ENCODE measurements at regions of chrX and their contacts with region 1.

Region 1: GRCh38 chrX:22063284-22063683 is 31.2 kb downstream of the PHEX start:
- DNase-seq: peak; percentile 64
- ATAC-seq: peak; percentile 74
- H3K4me3 ChIP-seq: no peak overlapping the region
- H3K27ac ChIP-seq: peak overlapping the region; percentile 74
- H3K4me1 ChIP-seq: peaks cover 20% of the 10 kb centered on the region
- H3K27me3 ChIP-seq: no peaks in the 10 kb centered on the region
- CTCF ChIP-seq: no peak
- EP300 ChIP-seq: peak; percentile 52 to 73; a peak in 2 of 4 replicates
- POLR2A ChIP-seq: no peak
- RAD21 ChIP-seq: no peak

Region 2: DNA sequence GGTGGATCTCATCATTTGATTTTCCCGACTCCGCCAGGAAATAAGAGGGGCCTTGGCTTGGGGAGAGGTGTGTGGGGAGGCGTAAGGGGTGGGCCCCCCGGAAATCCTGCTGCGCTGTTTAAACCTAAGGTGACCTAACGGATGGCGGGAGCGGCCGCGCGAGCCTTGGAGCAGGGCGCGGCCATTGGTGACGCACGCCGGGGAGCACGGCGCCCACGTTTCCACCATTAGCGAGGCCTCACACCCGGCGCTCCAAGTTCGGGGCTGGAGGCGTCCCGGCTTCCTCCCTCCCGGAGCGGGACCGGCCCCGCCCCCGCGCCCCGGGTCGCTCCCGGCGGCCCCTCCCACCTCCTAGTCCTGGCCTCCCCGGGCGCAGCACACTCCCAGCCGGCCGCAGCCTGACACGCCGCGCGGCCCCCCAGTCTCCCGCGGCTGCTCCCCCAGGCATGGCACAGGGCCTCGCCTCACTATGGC is 122.9 kb before region 1 on chrX and contains the start of gene SMS:
- CTCF ChIA-PET with region 1: no interaction called
- POLR2A ChIA-PET with region 1: no interaction called
- RAD21 ChIA-PET with region 1: interaction called, 5 read pairs
- SMC1A ChIA-PET with region 1: no interaction called
- in situ Hi-C with region 1: no loop called
- intact Hi-C with region 1: loop called (anchors 2 kb)
- DNase-seq: no peak
- ATAC-seq: peak; percentile 73
- H3K4me3 ChIP-seq: peak within 1 kb of the TSS; percentile 66
- H3K27ac ChIP-seq: peak within 1 kb of the TSS; percentile 35; the same call in 1 of the 2 replicates
- H3K4me1 ChIP-seq: no peaks in the 10 kb centered on the region
- H3K27me3 ChIP-seq: no peaks in the 10 kb centered on the region
- CTCF ChIP-seq: no peak
- EP300 ChIP-seq: no peak
- POLR2A ChIP-seq: 0 out of 2 replicates have a peak, but pooled peaks have one; percentile 73
- RAD21 ChIP-seq: no peak
- polyA plus RNA-seq, gene SMS: 55.8 to 87.2 TPM

Region 3: GRCh38 chrX:21993265-21993664 is 70.0 kb before region 1 on chrX:
- CTCF ChIA-PET with region 1: interaction called, 10 read pairs
- POLR2A ChIA-PET with region 1: interaction called, 23 read pairs
- RAD21 ChIA-PET with region 1: interaction called, 82 read pairs
- SMC1A ChIA-PET with region 1: interaction called, 168 read pairs
- in situ Hi-C with region 1: no loop called
- intact Hi-C with region 1: loop called (anchors 2 kb)
- DNase-seq: peak; percentile 30
- ATAC-seq: peak; percentile 36
- H3K4me3 ChIP-seq: no peak overlapping the region
- H3K27ac ChIP-seq: peak overlapping the region; percentile 62
- H3K4me1 ChIP-seq: peaks cover 16% of the 10 kb centered on the region
- H3K27me3 ChIP-seq: no peaks in the 10 kb centered on the region
- CTCF ChIP-seq: no peak
- EP300 ChIP-seq: no peak; a peak in 1 of 4 replicates
- POLR2A ChIP-seq: no peak
- RAD21 ChIP-seq: no peak

Region 4: DNA sequence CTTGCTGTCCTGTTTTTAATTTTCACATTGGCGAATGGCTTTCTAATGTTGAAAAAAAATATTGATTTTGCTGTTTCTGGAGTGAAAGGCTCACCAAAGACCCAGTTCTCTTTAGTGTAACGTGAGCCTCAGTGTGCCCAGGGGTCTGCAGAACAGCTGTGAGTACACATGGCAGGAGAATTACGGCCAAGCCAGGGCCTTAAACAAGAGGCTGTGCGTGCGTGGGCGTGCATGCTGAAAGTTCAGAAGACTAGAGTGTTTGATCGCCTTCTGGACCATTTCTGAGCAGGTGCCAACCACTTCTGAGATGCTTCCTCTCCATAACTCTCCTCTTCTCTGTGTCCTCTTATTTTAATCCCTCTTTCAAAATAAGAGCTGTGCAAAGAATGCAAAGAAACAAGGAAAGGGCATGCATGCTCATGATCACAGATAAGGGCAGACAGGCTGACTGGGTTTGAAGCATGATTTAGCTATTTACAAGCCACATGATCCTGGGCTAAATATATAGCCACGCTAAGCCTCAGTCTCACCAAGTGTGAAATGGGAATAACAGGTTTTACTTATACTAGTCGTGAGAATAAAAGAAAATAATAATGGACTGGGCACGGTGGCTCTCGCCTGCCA is 21.3 kb before region 1 on chrX:
- CTCF ChIA-PET with region 1: interaction called, 4 read pairs
- POLR2A ChIA-PET with region 1: interaction called, 7 read pairs
- RAD21 ChIA-PET with region 1: interaction called, 9 read pairs
- SMC1A ChIA-PET with region 1: interaction called, 14 read pairs
- in situ Hi-C with region 1: no loop called
- intact Hi-C with region 1: no loop called
- DNase-seq: no peak
- ATAC-seq: peak; percentile 13
- H3K4me3 ChIP-seq: no peak overlapping the region
- H3K27ac ChIP-seq: no peak overlapping the region
- H3K4me1 ChIP-seq: no peaks in the 10 kb centered on the region
- H3K27me3 ChIP-seq: no peaks in the 10 kb centered on the region
- CTCF ChIP-seq: no peak
- EP300 ChIP-seq: no peak
- POLR2A ChIP-seq: no peak
- RAD21 ChIP-seq: no peak

Region 5: GRCh38 chrX:22109442-22109841 is 46.2 kb after region 1 on chrX:
- CTCF ChIA-PET with region 1: interaction called, 11 read pairs
- POLR2A ChIA-PET with region 1: interaction called, 5 read pairs
- RAD21 ChIA-PET with region 1: interaction called, 15 read pairs
- SMC1A ChIA-PET with region 1: interaction called, 10 read pairs
- in situ Hi-C with region 1: no loop called
- intact Hi-C with region 1: no loop called
- DNase-seq: no peak
- ATAC-seq: peak; percentile 50
- H3K4me3 ChIP-seq: no peak overlapping the region
- H3K27ac ChIP-seq: no peak overlapping the region
- H3K4me1 ChIP-seq: no peaks in the 10 kb centered on the region
- H3K27me3 ChIP-seq: no peaks in the 10 kb centered on the region
- CTCF ChIP-seq: no peak
- EP300 ChIP-seq: no peak
- POLR2A ChIP-seq: no peak
- RAD21 ChIP-seq: no peak

Region 6: DNA sequence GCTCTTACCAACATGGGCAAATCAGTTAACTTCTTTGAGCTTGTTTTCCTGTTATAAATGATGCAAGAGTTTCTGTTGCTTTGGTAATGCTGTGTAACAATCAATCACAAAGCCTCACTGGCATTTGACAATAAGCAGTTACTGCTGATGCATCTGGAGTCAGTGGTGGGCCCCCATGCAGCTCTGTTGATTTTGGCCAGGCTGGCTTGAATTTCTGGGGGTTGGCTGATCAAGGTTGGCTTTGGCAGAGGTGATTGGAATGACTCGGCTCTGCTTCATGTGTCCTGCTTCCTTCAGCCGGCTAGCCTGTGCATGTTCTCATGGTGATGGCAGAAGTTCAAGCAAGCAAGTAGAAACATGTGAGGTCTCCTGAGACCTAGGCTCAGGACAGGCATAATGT is 59.2 kb after region 1 on chrX:
- CTCF ChIA-PET with region 1: interaction called, 3 read pairs
- POLR2A ChIA-PET with region 1: interaction called, 5 read pairs
- RAD21 ChIA-PET with region 1: interaction called, 10 read pairs
- SMC1A ChIA-PET with region 1: interaction called, 23 read pairs
- in situ Hi-C with region 1: no loop called
- intact Hi-C with region 1: no loop called
- DNase-seq: no peak
- ATAC-seq: peak; percentile 37
- H3K4me3 ChIP-seq: no peak overlapping the region
- H3K27ac ChIP-seq: no peak overlapping the region
- H3K4me1 ChIP-seq: no peaks in the 10 kb centered on the region
- H3K27me3 ChIP-seq: no peaks in the 10 kb centered on the region
- CTCF ChIP-seq: no peak
- EP300 ChIP-seq: no peak
- POLR2A ChIP-seq: no peak
- RAD21 ChIP-seq: no peak

Measured in GM12878 (cell line).